Ascending aorta (tissue), 2 donors: ENCODE measurements at regions of chr14 and their contacts with region 1.

Region 1: GRCh38 chr14:75982266-75983018 is 647 bp upstream of the TGFB3 start:
- DNase-seq: peak in 1 of 2 donors; percentile 92
- H3K4me3 ChIP-seq: peak overlapping the region; percentile 81 to 88
- H3K27ac ChIP-seq: peak overlapping the region; percentile 99 to 100
- H3K4me1 ChIP-seq: peaks cover 15 to 40% of the 10 kb centered on the region in 2 donors
- H3K27me3 ChIP-seq: no peaks in the 10 kb centered on the region
- CTCF ChIP-seq: peak; percentile 54 to 86 (median 83)

Region 2: DNA sequence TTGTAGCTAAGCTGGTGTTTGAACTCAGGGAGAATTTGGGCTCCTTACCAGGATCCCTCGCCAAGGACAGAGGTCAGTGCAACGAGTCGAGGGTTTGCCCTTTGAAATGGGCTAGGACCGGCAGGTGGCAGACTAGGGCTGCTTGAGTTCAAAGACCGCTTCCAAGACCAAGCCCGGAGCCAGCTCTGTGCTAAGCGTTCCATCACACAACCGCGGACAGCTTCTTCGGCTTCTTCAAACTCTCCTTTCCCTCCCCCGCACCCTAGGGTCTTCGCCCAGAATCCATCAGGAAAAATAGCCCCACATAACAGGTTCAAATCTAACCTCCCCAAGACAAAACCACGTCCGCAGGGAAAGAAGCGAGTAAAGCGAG is 404.7 kb before region 1 on chr14:
- intact Hi-C with region 1: loop called (anchors 2 kb)
- DNase-seq: peak; percentile 47 to 92
- H3K4me3 ChIP-seq: peak overlapping the region; percentile 65 to 74
- H3K27ac ChIP-seq: peak overlapping the region; percentile 73 to 76
- H3K4me1 ChIP-seq: peaks cover 6 to 11% of the 10 kb centered on the region in 2 donors
- H3K27me3 ChIP-seq: no peaks in the 10 kb centered on the region
- CTCF ChIP-seq: peak; percentile 69 to 81 (median 77)

Region 3: DNA sequence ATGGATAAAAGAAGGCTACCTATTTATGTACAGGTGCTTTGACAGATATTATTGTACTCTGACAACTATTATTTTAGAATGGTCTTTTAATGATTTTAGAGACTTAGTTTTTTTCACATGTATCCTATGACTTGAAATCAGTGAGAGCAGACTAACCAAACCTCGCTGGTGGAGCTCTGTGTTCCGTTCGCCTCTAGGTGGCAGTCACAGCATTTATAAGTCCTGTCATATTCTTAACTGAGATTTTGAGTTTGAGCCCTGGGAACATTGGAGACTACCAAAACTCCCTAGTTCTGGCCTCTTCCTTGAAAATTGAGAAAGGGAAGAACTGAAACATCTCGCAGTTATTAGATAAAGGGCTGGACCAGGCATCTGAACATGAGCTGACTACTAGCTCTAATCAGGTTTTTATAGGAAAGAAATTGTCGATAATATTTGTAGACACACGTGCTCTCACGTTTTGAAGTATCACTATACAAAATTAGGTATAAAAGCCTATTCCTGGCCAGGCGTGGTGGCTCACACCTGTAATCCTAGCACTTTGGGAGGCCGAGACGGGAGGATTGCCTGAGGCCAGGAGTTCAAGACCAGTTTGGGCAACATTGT is 273.1 kb before region 1 on chr14:
- intact Hi-C with region 1: loop called (anchors 1 kb)
- DNase-seq: peak; percentile 24 to 89
- H3K4me3 ChIP-seq: no peak overlapping the region
- H3K27ac ChIP-seq: peak overlapping the region in 1 of 2 donors; percentile 12
- H3K4me1 ChIP-seq: peaks cover 0 to 15% of the 10 kb centered on the region in 2 donors
- H3K27me3 ChIP-seq: no peaks in the 10 kb centered on the region
- CTCF ChIP-seq: peak; percentile 59 to 83 (median 82)

Region 4: GRCh38 chr14:75822522-75823141 is 159.8 kb before region 1 on chr14:
- intact Hi-C with region 1: loop called (anchors 10 kb)
- DNase-seq: no peak
- H3K4me3 ChIP-seq: no peak overlapping the region
- H3K27ac ChIP-seq: peak overlapping the region; percentile 79 to 87
- H3K4me1 ChIP-seq: peaks cover 8 to 33% of the 10 kb centered on the region in 2 donors
- H3K27me3 ChIP-seq: no peaks in the 10 kb centered on the region
- CTCF ChIP-seq: no peak

Region 5: GRCh38 chr14:75952489-75952888 is 30.0 kb before region 1 on chr14:
- intact Hi-C with region 1: no loop called
- DNase-seq: no peak
- H3K4me3 ChIP-seq: no peak overlapping the region
- H3K27ac ChIP-seq: no peak overlapping the region
- H3K4me1 ChIP-seq: no peaks in the 10 kb centered on the region
- H3K27me3 ChIP-seq: no peaks in the 10 kb centered on the region
- CTCF ChIP-seq: no peak

Region 6: GRCh38 chr14:76012354-76012753 is 29.9 kb after region 1 on chr14:
- intact Hi-C with region 1: loop called (anchors 1 kb)
- DNase-seq: peak; percentile 36 to 92
- H3K4me3 ChIP-seq: peak overlapping the region in 1 of 2 donors; percentile 1
- H3K27ac ChIP-seq: peak overlapping the region; percentile 86 to 95
- H3K4me1 ChIP-seq: peaks cover 0 to 19% of the 10 kb centered on the region in 2 donors
- H3K27me3 ChIP-seq: no peaks in the 10 kb centered on the region
- CTCF ChIP-seq: peak in 2 of 3 experiments; percentile 21 to 32